Activated naive CD4-positive, alpha-beta T cell treated with anti-CD3 and anti-CD28 coated beads for 36 hours (primary cell): ENCODE measurements at regions of chr20 and their contacts with region 1.

Region 1: GRCh38 chr20:5548902-5549599 is 201.2 kb upstream of the SHLD1 start:
- DNase-seq: no peak
- H3K4me3 Mint-ChIP-seq: no peak overlapping the region
- H3K27ac Mint-ChIP-seq: peak overlapping the region; percentile 52
- H3K4me1 Mint-ChIP-seq: peaks cover 37% of the 10 kb centered on the region
- H3K27me3 Mint-ChIP-seq: no peaks in the 10 kb centered on the region

Region 2: DNA sequence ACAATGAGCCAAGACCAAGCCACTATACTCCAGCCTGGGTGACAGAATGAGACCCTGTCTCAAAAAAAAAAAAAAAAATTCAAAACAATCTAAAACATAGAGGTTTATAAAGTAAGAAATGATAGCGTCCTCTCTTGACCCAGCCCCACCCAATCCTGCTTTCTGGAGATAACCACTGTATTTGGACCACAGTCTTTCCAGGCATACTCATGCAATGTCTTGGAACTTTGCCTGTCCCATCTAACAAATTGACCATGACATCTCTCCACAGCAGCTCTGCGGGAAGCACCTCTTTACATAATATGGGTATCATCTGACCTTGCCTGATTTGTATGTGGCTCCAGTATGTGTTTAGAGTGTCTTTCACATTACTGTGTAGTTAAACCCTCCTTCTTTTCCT is 192.0 kb after region 1 on chr20:
- CTCF ChIA-PET with region 1: no interaction called
- intact Hi-C with region 1: no loop called
- DNase-seq: no peak
- H3K4me3 Mint-ChIP-seq: no peak overlapping the region
- H3K27ac Mint-ChIP-seq: no peak overlapping the region
- H3K4me1 Mint-ChIP-seq: peaks cover 24% of the 10 kb centered on the region
- H3K27me3 Mint-ChIP-seq: no peaks in the 10 kb centered on the region

Region 3: GRCh38 chr20:5950271-5951031 is 401.4 kb after region 1 on chr20 and contains the starts of genes MCM8 and TRMT6:
- CTCF ChIA-PET with region 1: no interaction called
- intact Hi-C with region 1: loop called (anchors 5 kb)
- DNase-seq: peak; percentile 98
- H3K4me3 Mint-ChIP-seq: peak within 1 kb of the TSS; percentile 97
- H3K27ac Mint-ChIP-seq: peak within 1 kb of the TSS; percentile 95
- H3K4me1 Mint-ChIP-seq: peaks cover 61% of the 10 kb centered on the region
- H3K27me3 Mint-ChIP-seq: no peaks in the 10 kb centered on the region
- total RNA-seq, gene MCM8: 49.6 to 50.3 TPM
- total RNA-seq, gene TRMT6: 11.5 to 11.8 TPM